Endothelial cell of umbilical vein (primary cell): ENCODE measurements at regions of chrX and their contacts with region 1.

Region 1: GRCh38 chrX:3713225-3713936 is at the start of gene PRKX:
- DNase-seq: peak; percentile 43
- H3K4me3 ChIP-seq: peak within 1 kb of the TSS; percentile 58 to 81 (median 71)
- H3K27ac ChIP-seq: peak within 1 kb of the TSS; percentile 29
- H3K4me1 ChIP-seq: no peaks in the 10 kb centered on the region
- H3K27me3 ChIP-seq: no peaks in the 10 kb centered on the region
- CTCF ChIP-seq: no peak
- POLR2A ChIP-seq: no peak
- total RNA-seq, gene PRKX: 27.5 and 34.1 TPM in 2 replicates

Region 2: DNA sequence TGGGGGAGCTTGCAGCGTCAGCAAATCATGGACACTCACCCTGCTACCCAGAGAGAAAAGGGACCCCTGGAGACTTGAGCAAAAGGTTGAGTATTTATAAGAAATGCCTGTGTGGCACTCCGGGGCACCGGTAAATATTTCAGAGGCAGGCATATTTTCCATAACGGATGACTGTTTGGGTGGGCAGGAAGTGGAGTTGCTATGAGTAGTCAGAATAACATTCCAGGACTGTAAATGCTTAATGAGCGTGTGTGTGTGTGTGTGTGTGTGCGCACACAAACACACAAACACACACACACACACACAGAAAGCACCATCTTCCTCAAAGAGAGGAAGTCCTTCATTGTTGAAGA is 441.6 kb before region 1 on chrX:
- CTCF ChIA-PET with region 1: no interaction called
- POLR2A ChIA-PET with region 1: no interaction called
- dilution Hi-C with region 1: no loop called
- intact Hi-C with region 1: no loop called
- DNase-seq: peak; percentile 74
- H3K4me3 ChIP-seq: peak overlapping the region in 2 of 3 experiments; percentile 3 to 35
- H3K27ac ChIP-seq: peak overlapping the region; percentile 73
- H3K4me1 ChIP-seq: peaks cover 20% of the 10 kb centered on the region
- H3K27me3 ChIP-seq: no peaks in the 10 kb centered on the region
- CTCF ChIP-seq: no peak
- POLR2A ChIP-seq: no peak

Region 3: GRCh38 chrX:3621414-3621813 is 92.0 kb before region 1 on chrX:
- CTCF ChIA-PET with region 1: no interaction called
- POLR2A ChIA-PET with region 1: no interaction called
- dilution Hi-C with region 1: no loop called
- intact Hi-C with region 1: no loop called
- DNase-seq: no peak
- H3K4me3 ChIP-seq: no peak overlapping the region
- H3K27ac ChIP-seq: no peak overlapping the region
- H3K4me1 ChIP-seq: no peaks in the 10 kb centered on the region
- H3K27me3 ChIP-seq: no peaks in the 10 kb centered on the region
- CTCF ChIP-seq: no peak
- POLR2A ChIP-seq: no peak

Region 4: GRCh38 chrX:3651276-3651675 is 62.1 kb before region 1 on chrX:
- CTCF ChIA-PET with region 1: no interaction called
- POLR2A ChIA-PET with region 1: no interaction called
- dilution Hi-C with region 1: no loop called
- intact Hi-C with region 1: loop called (anchors 10 kb)
- DNase-seq: peak; percentile 46
- H3K4me3 ChIP-seq: no peak overlapping the region
- H3K27ac ChIP-seq: no peak overlapping the region
- H3K4me1 ChIP-seq: peaks cover 4% of the 10 kb centered on the region
- H3K27me3 ChIP-seq: no peaks in the 10 kb centered on the region
- CTCF ChIP-seq: peak in 1 of 2 donors; percentile 6
- POLR2A ChIP-seq: no peak

Region 5: GRCh38 chrX:3699821-3700381 is 13.5 kb before region 1 on chrX:
- CTCF ChIA-PET with region 1: interaction called, 3 read pairs
- POLR2A ChIA-PET with region 1: no interaction called
- dilution Hi-C with region 1: no loop called
- intact Hi-C with region 1: loop called (anchors 1 kb)
- DNase-seq: peak; percentile 64
- H3K4me3 ChIP-seq: peak overlapping the region in 2 of 3 experiments; percentile 12 to 62
- H3K27ac ChIP-seq: peak overlapping the region; percentile 46
- H3K4me1 ChIP-seq: peaks cover 10% of the 10 kb centered on the region
- H3K27me3 ChIP-seq: no peaks in the 10 kb centered on the region
- CTCF ChIP-seq: no peak
- POLR2A ChIP-seq: no peak